HepG2 (cell line): ENCODE measurements at regions of chr19 and their contacts with region 1.

Region 1: DNA sequence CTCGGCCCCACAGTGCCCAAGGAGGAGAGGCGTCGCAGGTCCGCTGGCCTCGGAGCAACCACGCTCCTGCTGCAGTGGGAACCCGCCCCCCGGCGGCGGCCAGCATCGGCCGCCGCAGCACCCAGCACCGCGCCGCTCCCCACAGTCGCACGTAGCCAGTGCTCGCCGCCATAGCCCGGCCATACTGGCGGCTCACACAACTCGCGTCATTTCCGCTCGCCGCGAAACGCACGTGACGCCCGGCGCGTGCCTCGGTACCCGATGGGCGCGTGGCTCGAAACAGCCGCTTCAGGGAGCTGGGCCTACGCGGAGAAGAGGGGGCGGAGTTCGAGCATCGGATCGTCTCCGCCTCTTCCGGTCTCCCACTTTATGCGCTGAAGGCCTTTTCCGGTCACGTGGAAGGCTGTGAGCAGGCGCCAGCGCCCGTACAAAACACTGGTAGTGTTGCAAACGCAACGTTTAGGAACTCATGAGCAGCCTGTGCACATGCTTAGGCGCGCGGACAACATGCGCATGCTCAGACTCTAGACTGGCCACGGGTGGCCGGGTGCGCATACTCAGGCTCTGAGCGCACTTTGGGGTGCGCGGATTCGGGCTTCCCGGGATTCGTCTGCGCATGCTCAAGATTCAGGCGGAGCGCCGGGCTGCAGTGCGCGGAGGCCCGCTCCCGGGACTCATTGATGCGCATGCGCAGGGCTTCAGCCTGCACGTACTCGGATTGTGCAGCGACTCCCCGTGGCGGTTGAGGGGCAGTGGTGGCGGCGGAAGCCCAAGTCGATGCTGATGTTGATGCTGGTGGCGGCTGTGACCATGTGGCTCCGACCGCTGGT is at the starts of genes CATSPERD and LONP1:
- DNase-seq: peak; percentile 96
- ATAC-seq: peak; percentile 90
- H3K4me3 ChIP-seq: peak within 1 kb of the TSS; percentile 78 to 99 (median 98)
- H3K27ac ChIP-seq: peak within 1 kb of the TSS; percentile 95
- H3K4me1 ChIP-seq: peaks cover 24% of the 10 kb centered on the region
- H3K27me3 ChIP-seq: no peaks in the 10 kb centered on the region; a peak in 1 of 5 replicates
- CTCF ChIP-seq: peak; percentile 97
- EP300 ChIP-seq: no peak
- POLR2A ChIP-seq: peak; percentile 88 to 93
- RAD21 ChIP-seq: peak; percentile 62; the same call in 1 of the 2 replicates
- total RNA-seq, gene CATSPERD: not detected in 2 replicates
- total RNA-seq, gene LONP1: 50.4 and 76.8 TPM in 2 replicates

Region 2: DNA sequence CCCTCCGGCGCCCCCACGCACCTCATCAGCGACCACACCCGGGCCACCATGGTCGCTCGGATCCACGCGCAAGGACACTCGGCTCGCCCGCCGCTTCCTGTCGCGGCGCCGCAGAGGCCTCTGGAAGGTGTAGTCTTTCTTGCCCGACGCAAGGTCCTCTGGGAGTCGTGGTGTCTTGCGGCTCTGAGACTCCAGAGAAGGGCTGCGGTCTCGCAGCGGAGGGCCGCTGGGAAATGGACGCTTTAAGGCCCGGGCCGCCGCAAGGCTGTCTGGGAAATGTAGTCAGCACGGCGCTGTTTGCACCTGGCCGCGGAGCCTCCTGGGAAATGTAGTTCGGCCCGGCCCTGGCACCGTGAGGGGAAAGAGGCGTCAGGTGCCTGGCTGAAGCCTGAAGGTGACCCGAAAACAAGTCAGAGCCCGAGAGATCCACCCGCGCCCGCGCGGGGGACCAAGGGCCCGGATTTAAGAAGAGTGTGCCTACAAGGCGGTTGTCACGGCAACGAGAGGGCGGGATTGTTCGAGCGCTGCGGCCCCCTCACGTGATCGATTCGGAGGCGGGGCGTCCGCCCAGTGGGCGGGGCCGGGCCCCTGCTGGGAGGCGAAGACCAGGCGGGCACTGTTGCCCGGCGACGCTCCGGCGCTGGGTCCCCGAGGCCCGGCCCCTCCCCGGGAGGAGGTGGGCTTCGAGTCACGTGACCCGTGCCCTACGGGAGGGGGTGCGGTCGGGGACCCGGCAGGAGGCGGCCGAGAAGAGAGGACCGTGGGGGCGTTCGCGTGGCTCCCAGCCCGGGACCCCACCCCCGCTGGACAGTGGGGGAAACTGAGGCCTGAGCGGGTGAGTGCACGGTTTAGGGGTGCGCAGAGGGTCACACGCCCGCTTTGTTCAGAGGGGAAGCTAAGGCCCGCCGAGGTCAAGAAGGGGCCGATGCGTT is 39.5 kb before region 1 on chr19 and contains the starts of genes HSD11B1L and MICOS13:
- CTCF ChIA-PET with region 1: no interaction called
- POLR2A ChIA-PET with region 1: no interaction called
- in situ Hi-C with region 1: no loop called
- intact Hi-C with region 1: no loop called
- DNase-seq: peak; percentile 97
- ATAC-seq: peak; percentile 92
- H3K4me3 ChIP-seq: peak within 1 kb of the TSS; percentile 87 to 100 (median 92)
- H3K27ac ChIP-seq: peak within 1 kb of the TSS; percentile 75
- H3K4me1 ChIP-seq: peaks cover 26% of the 10 kb centered on the region
- H3K27me3 ChIP-seq: no peaks in the 10 kb centered on the region; a peak in 1 of 5 replicates
- CTCF ChIP-seq: peak; percentile 19; the same call in 1 of the 2 replicates
- EP300 ChIP-seq: no peak
- POLR2A ChIP-seq: peak; percentile 57 to 79
- RAD21 ChIP-seq: 0 out of 2 replicates have a peak, but pooled peaks have one; percentile 30
- total RNA-seq, gene HSD11B1L: 2.8 TPM in 2 replicates
- total RNA-seq, gene MICOS13: 35.4 and 37.9 TPM in 2 replicates

Region 3: GRCh38 chr19:5790573-5791520 is 70.7 kb after region 1 on chr19 and contains the start of gene DUS3L:
- CTCF ChIA-PET with region 1: no interaction called
- POLR2A ChIA-PET with region 1: interaction called, 7 read pairs
- in situ Hi-C with region 1: no loop called
- intact Hi-C with region 1: loop called (anchors 2 kb)
- DNase-seq: peak; percentile 97
- ATAC-seq: peak; percentile 97
- H3K4me3 ChIP-seq: peak within 1 kb of the TSS; percentile 57 to 79 (median 63)
- H3K27ac ChIP-seq: peak within 1 kb of the TSS; percentile 93
- H3K4me1 ChIP-seq: peaks cover 29% of the 10 kb centered on the region
- H3K27me3 ChIP-seq: no peaks in the 10 kb centered on the region
- CTCF ChIP-seq: no peak; the same call in 1 of the 2 replicates
- EP300 ChIP-seq: no peak
- POLR2A ChIP-seq: peak; percentile 60 to 86
- RAD21 ChIP-seq: no peak; the same call in 1 of the 2 replicates
- total RNA-seq, gene DUS3L: 20.6 and 25.1 TPM in 2 replicates

Region 4: DNA sequence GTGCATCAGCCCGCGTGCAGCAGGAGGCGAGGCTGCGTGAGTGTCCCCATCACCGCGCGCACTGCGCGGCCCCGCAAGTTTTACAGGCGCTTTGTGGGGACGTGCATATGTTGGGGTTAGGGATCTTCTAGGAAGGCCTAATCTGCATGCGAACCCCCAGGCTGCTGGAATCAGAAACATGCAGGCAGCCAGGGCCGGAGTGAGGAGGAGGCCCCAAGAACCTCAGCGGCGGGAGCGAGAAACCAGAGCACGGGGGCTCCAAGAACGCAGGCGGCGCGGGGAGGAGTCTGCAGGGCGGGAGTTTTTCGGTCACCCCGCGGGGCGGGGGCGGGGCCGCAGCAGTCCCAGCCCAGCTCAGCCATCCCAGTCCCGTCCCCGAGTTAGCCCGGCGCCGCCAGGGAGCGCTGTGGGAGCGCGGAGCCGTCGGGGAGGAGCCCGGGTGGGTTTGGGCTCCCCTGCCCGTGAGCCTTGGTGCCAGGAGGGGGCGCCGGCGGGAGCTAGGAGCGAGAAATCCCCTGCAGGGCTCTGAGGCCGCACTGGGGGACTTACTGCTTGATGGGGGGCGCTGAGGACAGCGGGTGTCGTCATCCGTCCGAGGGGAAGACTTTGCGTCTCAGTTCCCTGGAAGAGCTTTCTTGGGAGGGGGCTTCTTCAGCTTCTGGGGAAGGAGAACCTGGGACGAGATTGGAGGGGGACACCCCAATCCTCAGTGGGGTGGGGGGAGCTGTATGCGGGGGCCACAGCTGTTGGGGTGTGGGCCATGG is 83.8 kb after region 1 on chr19:
- CTCF ChIA-PET with region 1: no interaction called
- POLR2A ChIA-PET with region 1: no interaction called
- in situ Hi-C with region 1: no loop called
- intact Hi-C with region 1: no loop called
- DNase-seq: peak; percentile 83
- ATAC-seq: peak; percentile 88
- H3K4me3 ChIP-seq: peak overlapping the region; percentile 36 to 68 (median 42)
- H3K27ac ChIP-seq: no peak overlapping the region
- H3K4me1 ChIP-seq: peaks cover 67% of the 10 kb centered on the region
- H3K27me3 ChIP-seq: no peaks in the 10 kb centered on the region; a peak in 1 of 5 replicates
- CTCF ChIP-seq: peak; percentile 99
- EP300 ChIP-seq: peak; percentile 7 to 25; a peak in 1 of 4 replicates
- POLR2A ChIP-seq: peak in 1 of 2 experiments; percentile 42; a peak in 1 of 4 replicates
- RAD21 ChIP-seq: peak; percentile 100

Region 5: DNA sequence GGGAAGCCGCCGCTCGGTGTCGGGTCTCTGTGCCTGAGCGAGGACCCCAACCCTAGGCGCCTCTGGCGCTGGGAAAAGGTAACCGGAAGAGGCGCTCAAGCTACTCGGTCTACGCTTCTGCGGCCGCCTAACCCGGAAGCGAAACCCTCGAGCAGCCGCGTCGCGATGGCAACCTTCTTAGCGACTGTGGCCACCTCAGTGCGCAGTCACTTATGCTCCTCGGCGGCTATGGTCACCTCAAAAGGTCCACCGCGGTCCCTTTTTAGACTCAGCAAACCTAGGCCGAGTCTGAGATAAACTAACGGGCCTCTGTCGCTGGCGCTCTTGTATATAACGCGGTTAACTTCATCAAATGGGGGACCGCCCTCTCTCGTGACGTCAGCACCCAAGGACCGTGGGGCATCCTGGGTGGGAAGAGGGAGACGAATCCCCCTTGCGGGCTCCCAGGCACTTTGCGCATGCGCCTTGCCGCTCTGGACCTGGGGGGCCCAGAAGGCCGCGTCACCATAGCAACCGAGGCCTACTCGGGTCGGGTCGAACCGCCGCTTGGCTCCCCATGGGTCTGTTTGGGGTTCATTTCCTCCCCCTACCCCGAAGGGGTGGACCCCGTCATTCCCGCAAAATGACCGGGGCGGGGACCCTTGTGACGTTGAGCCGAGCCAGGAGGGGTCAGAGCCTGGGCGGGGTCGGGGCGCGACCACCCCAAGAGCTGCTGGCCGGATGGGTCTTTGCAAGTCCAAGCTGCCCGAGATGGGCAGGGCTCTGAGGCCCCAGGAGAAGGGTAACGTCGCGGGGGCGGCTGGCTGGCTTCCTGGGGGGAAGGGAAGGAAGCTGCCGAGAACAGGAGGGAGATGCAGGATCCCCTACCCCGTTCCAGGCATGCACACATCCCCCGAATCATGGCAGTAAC is 673.2 kb after region 1 on chr19 and contains the start of gene GTF2F1:
- CTCF ChIA-PET with region 1: no interaction called
- POLR2A ChIA-PET with region 1: no interaction called
- in situ Hi-C with region 1: no loop called
- intact Hi-C with region 1: no loop called
- DNase-seq: peak; percentile 89
- ATAC-seq: peak; percentile 92
- H3K4me3 ChIP-seq: peak within 1 kb of the TSS; percentile 81 to 99 (median 92)
- H3K27ac ChIP-seq: peak within 1 kb of the TSS; percentile 65
- H3K4me1 ChIP-seq: peaks cover 24% of the 10 kb centered on the region
- H3K27me3 ChIP-seq: no peaks in the 10 kb centered on the region; a peak in 1 of 5 replicates
- CTCF ChIP-seq: peak; percentile 54
- EP300 ChIP-seq: no peak
- POLR2A ChIP-seq: peak; percentile 52 to 70; a peak in 3 of 4 replicates
- RAD21 ChIP-seq: peak; percentile 63; the same call in 1 of the 2 replicates
- total RNA-seq, gene GTF2F1: 30.7 and 34.1 TPM in 2 replicates